Lower lobe of right lung (tissue), 2 donors: ENCODE measurements at regions of chr14 and their contacts with region 1.

Region 1: GRCh38 chr14:20855652-20856291 is 35.4 kb upstream of the RNASE3 start:
- DNase-seq: peak; percentile 70
- ATAC-seq: peak; percentile 94 to 95
- H3K4me3 ChIP-seq: no peak overlapping the region
- H3K27ac ChIP-seq: no peak overlapping the region
- H3K4me1 ChIP-seq: peaks cover 4% of the 10 kb centered on the region
- H3K27me3 ChIP-seq: peaks cover 5% of the 10 kb centered on the region
- CTCF ChIP-seq: peak; percentile 77

Region 2: DNA sequence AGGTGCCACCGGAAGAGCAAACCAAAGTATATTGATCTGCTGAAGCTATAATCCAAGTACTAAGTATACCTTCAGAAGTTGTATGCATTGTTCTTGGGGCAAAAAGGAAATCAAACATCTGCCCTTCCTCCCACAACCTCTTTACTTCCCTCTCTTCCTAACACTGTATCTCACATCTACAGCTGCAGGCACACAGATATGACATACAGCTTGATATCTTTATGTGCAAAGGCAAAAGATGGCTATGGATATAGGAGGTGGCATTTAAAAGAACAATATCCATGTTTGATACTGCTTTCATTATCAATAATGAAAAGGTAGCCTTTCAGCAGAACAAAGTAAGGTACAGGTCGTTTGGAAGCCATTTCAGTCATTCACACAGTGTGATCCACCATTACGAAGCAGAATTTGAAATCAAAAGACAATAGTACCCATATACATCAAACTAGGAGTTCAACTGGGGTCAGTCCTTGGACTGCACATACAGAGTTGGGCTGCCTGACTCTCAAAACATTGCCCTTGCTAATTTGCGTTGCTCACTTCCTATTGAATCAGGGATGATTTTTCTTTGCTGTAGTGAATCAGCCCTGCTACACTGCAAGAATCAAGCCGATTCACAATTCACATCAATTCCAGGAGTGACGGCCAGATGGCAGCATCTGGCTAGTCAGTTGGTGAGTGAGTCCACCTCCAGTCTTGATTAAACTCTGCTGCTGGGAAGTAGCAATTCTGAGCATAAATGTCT is 158.3 kb before region 1 on chr14:
- intact Hi-C with region 1: loop called (anchors 5 kb)
- DNase-seq: peak; percentile 61
- ATAC-seq: peak; percentile 86 to 92
- H3K4me3 ChIP-seq: no peak overlapping the region
- H3K27ac ChIP-seq: no peak overlapping the region
- H3K4me1 ChIP-seq: peaks cover 10% of the 10 kb centered on the region
- H3K27me3 ChIP-seq: no peaks in the 10 kb centered on the region
- CTCF ChIP-seq: peak; percentile 80

Region 3: GRCh38 chr14:20757965-20758364 is 97.8 kb before region 1 on chr14:
- intact Hi-C with region 1: loop called (anchors 10 kb)
- DNase-seq: peak; percentile 44
- ATAC-seq: no peak
- H3K4me3 ChIP-seq: no peak overlapping the region
- H3K27ac ChIP-seq: no peak overlapping the region
- H3K4me1 ChIP-seq: no peaks in the 10 kb centered on the region
- H3K27me3 ChIP-seq: no peaks in the 10 kb centered on the region
- CTCF ChIP-seq: peak; percentile 48

Region 4: DNA sequence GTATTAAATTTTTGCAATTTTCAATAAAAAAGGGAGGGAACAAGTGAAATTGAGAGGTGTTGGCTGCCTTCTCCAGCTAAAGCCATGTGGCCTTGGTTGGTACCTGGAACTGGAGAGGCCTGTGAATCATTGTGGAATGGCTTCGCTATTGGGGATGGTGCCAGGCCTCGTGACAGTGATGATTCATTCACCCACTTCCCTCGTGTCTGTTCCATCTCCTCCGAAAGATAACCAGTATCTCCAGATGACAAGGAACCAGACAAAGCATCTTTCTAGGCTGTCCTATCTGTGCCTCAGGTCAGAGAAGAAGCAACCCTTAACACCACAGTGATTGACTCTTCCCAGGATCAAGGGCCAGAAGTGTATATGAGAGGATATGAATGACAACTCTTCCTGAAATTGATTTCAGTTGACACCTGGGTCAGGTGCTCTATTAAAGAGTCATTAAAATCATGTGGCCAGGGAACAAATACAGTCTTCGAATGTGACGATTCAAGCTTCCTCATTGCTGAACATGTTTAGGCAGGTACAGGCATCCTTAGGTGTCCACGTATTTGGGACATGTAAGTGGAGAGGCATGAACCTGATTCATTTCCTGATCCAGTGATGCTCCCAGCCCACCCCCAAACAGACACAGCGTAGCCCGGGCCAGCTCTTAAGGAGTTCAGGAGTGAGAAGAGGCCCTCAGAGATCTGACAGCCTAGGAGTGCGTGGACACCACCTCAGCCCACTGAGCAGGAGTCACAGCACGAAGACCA is 186.1 kb after region 1 on chr14 and contains the start of gene RNASE7:
- intact Hi-C with region 1: no loop called
- DNase-seq: no peak
- ATAC-seq: no peak
- H3K4me3 ChIP-seq: no peak within 1 kb of the TSS
- H3K27ac ChIP-seq: peak within 1 kb of the TSS; percentile 25
- H3K4me1 ChIP-seq: peaks cover 47% of the 10 kb centered on the region
- H3K27me3 ChIP-seq: no peaks in the 10 kb centered on the region
- CTCF ChIP-seq: no peak
- total RNA-seq, gene RNASE7: not detected